ENCODE measurements at regions of chr12 and their contacts with region 1.

Region 1: DNA sequence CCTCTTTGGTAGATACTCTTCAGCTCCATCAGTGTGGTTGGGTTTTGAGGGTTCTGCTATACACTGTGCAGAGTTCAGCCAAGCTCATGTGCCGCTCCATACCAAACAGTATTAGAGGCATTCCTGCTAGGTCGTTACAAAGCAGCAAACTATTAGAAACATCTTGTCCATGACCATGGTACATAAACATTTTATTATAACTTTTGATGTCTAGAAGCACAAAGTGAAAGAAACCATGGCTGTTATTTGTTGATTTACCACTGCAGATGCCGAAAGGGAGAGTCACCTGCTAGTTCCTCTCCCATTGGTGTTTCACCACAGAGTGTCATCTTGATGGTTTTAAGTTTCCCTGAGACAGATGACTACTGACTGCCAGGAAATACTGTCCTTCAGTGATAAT is 242.0 kb downstream of the ADAMTS20 start:
- DNase-seq: no peak
- ATAC-seq: no peak
- H3K4me3 Mint-ChIP-seq: no peak overlapping the region
- H3K27ac Mint-ChIP-seq: no peak overlapping the region
- H3K4me1 Mint-ChIP-seq: no peaks in the 10 kb centered on the region
- H3K27me3 Mint-ChIP-seq: no peaks in the 10 kb centered on the region
- CTCF ChIP-seq: no peak

Region 2: DNA sequence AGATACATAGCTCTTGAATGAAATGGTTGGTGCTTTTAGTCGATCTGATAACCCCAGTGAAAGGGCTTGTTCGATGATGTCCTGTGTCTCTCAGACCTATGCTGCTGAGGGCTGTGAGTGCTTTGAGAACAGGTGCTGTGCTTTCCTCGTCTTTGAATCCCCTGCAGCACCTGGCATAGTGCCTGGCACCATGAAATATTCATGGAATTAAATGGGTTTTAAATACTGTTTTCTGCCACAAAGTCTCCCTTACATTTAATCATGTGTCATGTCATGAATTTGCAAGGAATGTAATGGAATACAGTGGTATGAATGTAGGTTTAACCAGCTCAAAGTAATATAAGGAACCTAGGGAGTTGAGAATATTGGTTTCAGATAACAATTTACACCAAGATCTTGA is 500.0 kb before region 1 on chr12:
- CTCF ChIA-PET with region 1: no interaction called
- POLR2A ChIA-PET with region 1: no interaction called
- intact Hi-C with region 1: loop called (anchors 10 kb)
- DNase-seq: no peak
- ATAC-seq: no peak
- H3K4me3 Mint-ChIP-seq: no peak overlapping the region
- H3K27ac Mint-ChIP-seq: no peak overlapping the region
- H3K4me1 Mint-ChIP-seq: no peaks in the 10 kb centered on the region
- H3K27me3 Mint-ChIP-seq: no peaks in the 10 kb centered on the region
- CTCF ChIP-seq: no peak

Measured in activated B cell treated with CpG ODN at 0.5 μM for 24 hours (primary cell).